A673 (cell line): ENCODE measurements at regions of chr1 and their contacts with region 1.

Region 1: DNA sequence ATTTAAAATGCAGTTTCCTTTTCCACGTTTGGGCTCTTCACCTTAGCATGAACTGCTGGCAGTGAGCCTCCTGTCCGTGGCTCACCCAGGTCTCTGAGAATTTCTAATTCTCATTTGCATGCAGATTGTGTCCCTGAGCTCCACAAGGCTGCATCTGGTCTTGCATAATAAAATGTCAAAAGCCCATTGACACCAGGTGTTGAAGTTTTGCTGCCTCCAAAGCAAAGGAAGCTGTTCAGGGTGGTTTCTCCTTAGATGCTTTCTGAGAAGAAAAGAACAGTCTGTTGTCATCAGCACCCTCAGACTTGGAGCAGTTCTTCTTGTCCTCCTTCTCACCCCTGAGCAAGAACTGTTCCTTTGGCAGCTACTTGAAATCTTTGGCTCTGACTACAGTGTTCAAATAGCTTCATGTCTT is 433.1 kb upstream of the KAZN start:
- DNase-seq: no peak
- H3K4me3 ChIP-seq: no peak overlapping the region
- H3K27ac ChIP-seq: no peak overlapping the region
- H3K4me1 ChIP-seq: no peaks in the 10 kb centered on the region
- H3K27me3 ChIP-seq: no peaks in the 10 kb centered on the region
- CTCF ChIP-seq: no peak

Region 2: GRCh38 chr1:13469343-13469742 is 696.1 kb before region 1 on chr1:
- CTCF ChIA-PET with region 1: interaction called, 13 read pairs
- POLR2A ChIA-PET with region 1: no interaction called
- intact Hi-C with region 1: no loop called
- DNase-seq: peak; percentile 45
- H3K4me3 ChIP-seq: no peak overlapping the region
- H3K27ac ChIP-seq: no peak overlapping the region
- H3K4me1 ChIP-seq: no peaks in the 10 kb centered on the region
- H3K27me3 ChIP-seq: no peaks in the 10 kb centered on the region
- CTCF ChIP-seq: peak; percentile 50

Region 3: GRCh38 chr1:14332158-14332557 is 166.8 kb after region 1 on chr1:
- CTCF ChIA-PET with region 1: no interaction called
- POLR2A ChIA-PET with region 1: no interaction called
- intact Hi-C with region 1: no loop called
- DNase-seq: no peak
- H3K4me3 ChIP-seq: no peak overlapping the region
- H3K27ac ChIP-seq: no peak overlapping the region
- H3K4me1 ChIP-seq: no peaks in the 10 kb centered on the region
- H3K27me3 ChIP-seq: no peaks in the 10 kb centered on the region
- CTCF ChIP-seq: no peak